ENCODE measurements at regions of chr10 and their contacts with region 1.

Region 1: DNA sequence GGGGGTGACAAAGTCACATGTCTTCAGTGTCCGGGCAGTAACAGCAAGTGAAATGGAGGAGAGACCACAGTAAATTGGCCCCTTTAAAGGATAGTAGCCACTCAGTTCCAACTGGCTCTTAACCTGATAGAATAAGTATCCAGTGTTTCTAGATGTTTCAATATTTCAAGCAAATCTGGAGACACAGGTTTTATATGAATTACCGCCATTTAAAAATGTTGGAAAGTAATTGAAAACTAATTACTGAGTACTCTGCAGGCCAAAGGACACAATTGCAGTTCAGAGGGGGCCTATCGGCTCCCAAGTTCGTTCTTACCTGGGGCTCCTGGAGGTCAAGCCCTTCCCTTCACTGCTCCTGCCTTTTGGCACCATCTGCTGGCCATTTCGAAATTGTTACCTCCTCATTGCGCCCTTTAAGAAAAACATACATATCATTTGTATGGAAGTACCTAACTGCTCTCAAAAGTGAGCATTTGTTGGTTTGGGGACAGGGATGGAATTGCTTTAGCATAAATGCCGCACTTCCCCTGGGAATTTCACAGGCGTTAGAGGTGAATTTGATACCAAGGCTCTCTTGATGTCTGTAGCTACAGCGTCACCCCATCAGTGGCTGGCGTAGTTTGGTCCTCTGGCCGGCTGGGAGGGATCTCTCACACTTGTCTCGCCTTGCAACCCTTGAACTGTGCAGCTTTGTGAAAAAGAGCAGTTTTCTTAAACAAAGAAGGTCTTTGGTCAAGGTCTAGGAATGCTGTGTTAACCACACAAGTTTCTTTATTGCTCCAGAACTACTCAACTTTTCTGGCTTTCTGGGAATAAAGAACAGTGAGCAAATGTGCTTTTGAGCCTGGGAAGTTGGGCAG is 220.0 kb downstream of the ARHGAP21 start:
- DNase-seq: peak in 2 of 5 donors; percentile 23 to 46
- ATAC-seq: peak in 2 of 4 donors; percentile 52 to 54
- H3K4me3 ChIP-seq: no peak overlapping the region
- H3K27ac ChIP-seq: peak overlapping the region in 1 of 12 donors; percentile 6
- H3K4me1 ChIP-seq: peaks cover 0 to 4% (median 0%) of the 10 kb centered on the region in 12 donors
- H3K27me3 ChIP-seq: no peaks in the 10 kb centered on the region
- CTCF ChIP-seq: peak; percentile 40 to 70 (median 58)
- POLR2A ChIP-seq: no peak

Region 2: GRCh38 chr10:22527520-22527919 is 1976.2 kb before region 1 on chr10:
- intact Hi-C with region 1: no loop called
- DNase-seq: no peak
- ATAC-seq: no peak
- H3K4me3 ChIP-seq: no peak overlapping the region
- H3K27ac ChIP-seq: no peak overlapping the region
- H3K4me1 ChIP-seq: no peaks in the 10 kb centered on the region
- H3K27me3 ChIP-seq: no peaks in the 10 kb centered on the region
- CTCF ChIP-seq: no peak
- POLR2A ChIP-seq: no peak

Region 3: DNA sequence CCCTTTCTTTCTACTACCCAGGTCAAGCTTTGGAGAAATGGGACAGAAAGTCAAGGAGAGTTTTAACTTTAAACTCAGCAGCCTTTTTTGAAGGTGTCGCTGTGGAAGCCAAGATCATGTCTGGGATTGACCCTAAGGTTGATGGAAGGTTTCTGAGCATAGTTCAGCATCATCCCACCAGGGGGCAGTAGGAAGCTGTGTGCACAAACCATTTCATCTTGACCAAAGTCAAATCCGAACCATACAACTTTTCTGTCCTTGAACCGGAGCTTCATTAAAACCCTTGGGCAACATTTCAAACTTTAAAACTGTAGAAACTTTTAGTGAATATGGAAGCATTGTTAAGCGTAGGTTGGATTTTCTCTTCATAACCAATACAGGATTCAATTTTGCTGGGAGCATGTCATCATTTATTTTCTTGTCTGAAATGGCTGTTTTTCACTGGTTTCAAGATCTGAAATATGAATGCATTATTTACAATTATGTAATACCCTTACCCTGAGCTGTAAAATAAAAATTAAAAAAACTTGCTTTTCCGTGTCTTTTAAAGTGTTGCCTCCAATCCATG is 509.1 kb before region 1 on chr10:
- intact Hi-C with region 1: loop called in 4 of 10 experiments (anchors 5 kb)
- DNase-seq: peak in 4 of 5 donors; percentile 40 to 64 (median 58)
- ATAC-seq: peak in 3 of 4 donors; percentile 73 to 80 (median 77)
- H3K4me3 ChIP-seq: peak overlapping the region in 2 of 12 donors; percentile 12 to 14
- H3K27ac ChIP-seq: no peak overlapping the region
- H3K4me1 ChIP-seq: peaks cover 0 to 8% (median 1%) of the 10 kb centered on the region in 12 donors
- H3K27me3 ChIP-seq: no peaks in the 10 kb centered on the region
- CTCF ChIP-seq: peak; percentile 75 to 95 (median 90)
- POLR2A ChIP-seq: no peak

Region 4: GRCh38 chr10:24360282-24361127 is 143.2 kb before region 1 on chr10:
- intact Hi-C with region 1: loop called in 2 of 10 experiments (anchors 5 to 10 kb)
- DNase-seq: peak in 4 of 5 donors; percentile 67 to 75 (median 69)
- ATAC-seq: peak in 3 of 4 donors; percentile 60 to 83 (median 78)
- H3K4me3 ChIP-seq: no peak overlapping the region
- H3K27ac ChIP-seq: no peak overlapping the region
- H3K4me1 ChIP-seq: peaks cover 0 to 18% (median 3%) of the 10 kb centered on the region in 12 donors
- H3K27me3 ChIP-seq: no peaks in the 10 kb centered on the region
- CTCF ChIP-seq: peak; percentile 49 to 85 (median 75)
- POLR2A ChIP-seq: no peak

Region 5: GRCh38 chr10:24396398-24396797 is 107.3 kb before region 1 on chr10:
- intact Hi-C with region 1: loop called in 2 of 10 experiments (anchors 5 to 10 kb)
- DNase-seq: no peak
- ATAC-seq: no peak
- H3K4me3 ChIP-seq: no peak overlapping the region
- H3K27ac ChIP-seq: no peak overlapping the region
- H3K4me1 ChIP-seq: no peaks in the 10 kb centered on the region
- H3K27me3 ChIP-seq: no peaks in the 10 kb centered on the region
- CTCF ChIP-seq: peak in 5 of 12 donors; percentile 12 to 18 (median 17)
- POLR2A ChIP-seq: no peak

Region 6: GRCh38 chr10:24449321-24449740 is 54.4 kb before region 1 on chr10:
- intact Hi-C with region 1: loop called in 2 of 10 experiments (anchors 5 kb)
- DNase-seq: no peak
- ATAC-seq: peak; percentile 61 to 90 (median 72)
- H3K4me3 ChIP-seq: peak overlapping the region in 11 of 12 donors; percentile 10 to 58 (median 43)
- H3K27ac ChIP-seq: peak overlapping the region; percentile 10 to 74 (median 62)
- H3K4me1 ChIP-seq: peaks cover 6 to 58% (median 30%) of the 10 kb centered on the region in 12 donors
- H3K27me3 ChIP-seq: no peaks in the 10 kb centered on the region
- CTCF ChIP-seq: no peak
- POLR2A ChIP-seq: no peak